ENCODE measurements at regions of chrX and their contacts with region 1.

Region 1: GRCh38 chrX:34790026-34790425 is 132.9 kb upstream of the TMEM47 start:
- DNase-seq: no peak
- H3K4me3 ChIP-seq: no peak overlapping the region
- H3K27ac ChIP-seq: no peak overlapping the region
- H3K4me1 ChIP-seq: no peaks in the 10 kb centered on the region
- H3K27me3 ChIP-seq: no peaks in the 10 kb centered on the region
- CTCF ChIP-seq: no peak
- EP300 ChIP-seq: no peak
- POLR2A ChIP-seq: no peak

Region 2: DNA sequence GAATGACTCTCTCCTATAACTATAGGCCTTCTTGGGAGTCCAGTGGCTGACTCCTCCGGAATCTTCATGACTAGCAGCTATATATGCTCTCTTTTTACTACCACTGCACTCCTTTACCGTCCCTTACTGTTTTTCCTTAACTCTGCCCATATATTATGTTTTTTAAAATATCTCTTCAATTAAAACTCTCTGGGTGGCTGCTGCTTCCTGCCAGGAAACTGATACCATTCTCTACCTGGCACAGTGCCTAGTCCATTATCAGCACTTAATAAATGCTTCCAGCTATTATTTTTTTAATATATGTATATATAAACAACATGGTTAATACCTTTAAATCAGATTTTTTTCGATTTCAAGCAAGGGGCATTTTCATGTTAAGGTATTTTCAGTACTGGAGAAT is 15.9 kb after region 1 on chrX:
- in situ Hi-C with region 1: no loop called
- intact Hi-C with region 1: loop called (anchors 2 kb)
- DNase-seq: no peak
- H3K4me3 ChIP-seq: no peak overlapping the region
- H3K27ac ChIP-seq: no peak overlapping the region
- H3K4me1 ChIP-seq: no peaks in the 10 kb centered on the region
- H3K27me3 ChIP-seq: no peaks in the 10 kb centered on the region
- CTCF ChIP-seq: no peak
- EP300 ChIP-seq: no peak
- POLR2A ChIP-seq: no peak